Activated CD4-positive, alpha-beta memory T cell treated with anti-CD3 and anti-CD28 coated beads for 36 hours (primary cell): ENCODE measurements at regions of chr7 and their contacts with region 1.

Region 1: DNA sequence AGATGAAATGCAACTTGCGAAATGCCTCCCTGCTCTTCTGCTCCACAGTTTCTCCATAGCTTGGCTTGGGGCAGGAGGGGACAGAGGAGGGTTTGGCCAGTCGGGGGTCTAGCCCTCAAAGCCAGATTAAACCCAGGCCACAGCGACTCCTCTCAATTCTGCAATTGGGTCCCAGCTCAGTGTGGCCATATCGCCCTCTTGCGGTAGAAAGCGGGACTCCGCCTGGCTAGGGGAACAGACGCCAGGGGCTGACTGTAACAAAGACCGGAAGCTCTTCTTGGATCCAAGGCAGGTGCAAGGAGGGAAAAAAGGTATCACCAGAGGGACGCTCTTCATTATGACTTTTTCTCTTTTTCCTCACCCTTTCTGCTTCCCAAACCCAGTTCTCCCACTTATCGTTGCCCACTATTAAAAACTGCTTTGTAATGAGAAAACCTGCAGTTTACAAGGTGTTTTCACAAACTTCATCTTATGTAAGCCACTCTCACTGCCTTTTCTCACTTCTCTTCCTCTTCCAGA is 36.6 kb upstream of the TNPO3 start:
- DNase-seq: peak; percentile 93
- H3K4me3 Mint-ChIP-seq: no peak overlapping the region
- H3K27ac Mint-ChIP-seq: peak overlapping the region; percentile 52
- H3K4me1 Mint-ChIP-seq: peaks cover 15% of the 10 kb centered on the region
- H3K27me3 Mint-ChIP-seq: peaks cover 1% of the 10 kb centered on the region

Region 2: DNA sequence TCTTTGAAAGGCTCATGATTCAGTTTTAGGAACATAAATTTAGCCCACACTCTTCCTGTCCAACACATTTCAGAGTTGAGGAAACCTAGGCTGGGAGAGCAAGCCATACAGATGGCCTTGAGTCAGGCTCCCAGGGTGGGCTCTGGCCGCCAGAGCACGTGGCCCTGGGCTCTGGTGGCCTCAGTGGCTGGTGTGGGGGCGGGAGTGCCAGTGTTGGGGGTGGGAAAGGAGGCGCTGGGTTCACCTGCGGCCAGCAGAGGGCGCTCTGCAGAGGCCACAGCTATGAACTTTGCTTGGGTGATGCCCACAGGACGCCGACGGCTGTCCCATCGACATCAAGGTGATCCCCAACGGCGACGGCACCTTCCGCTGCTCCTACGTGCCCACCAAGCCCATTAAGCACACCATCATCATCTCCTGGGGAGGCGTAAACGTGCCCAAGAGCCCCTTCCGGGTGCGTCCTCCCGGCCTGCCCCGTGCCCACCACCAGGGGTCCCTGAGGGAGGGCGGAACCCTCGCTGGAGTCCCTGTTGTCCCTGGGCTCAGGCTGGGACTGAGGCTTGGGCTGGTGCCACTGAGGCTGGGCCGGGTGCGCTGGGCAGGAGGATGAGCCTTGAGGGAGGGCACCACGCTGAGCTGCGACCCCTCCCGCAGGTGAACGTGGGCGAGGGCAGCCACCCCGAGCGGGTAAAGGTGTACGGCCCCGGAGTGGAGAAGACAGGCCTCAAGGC is 249.5 kb before region 1 on chr7:
- CTCF ChIA-PET with region 1: interaction called, 6 read pairs
- POLR2A ChIA-PET with region 1: no interaction called
- intact Hi-C with region 1: loop called (anchors 1 kb)
- DNase-seq: peak; percentile 75
- H3K4me3 Mint-ChIP-seq: no peak overlapping the region
- H3K27ac Mint-ChIP-seq: no peak overlapping the region
- H3K4me1 Mint-ChIP-seq: peaks cover 5% of the 10 kb centered on the region
- H3K27me3 Mint-ChIP-seq: no peaks in the 10 kb centered on the region

Region 3: GRCh38 chr7:128904381-128905197 is 187.0 kb before region 1 on chr7:
- CTCF ChIA-PET with region 1: interaction called, 70 read pairs
- POLR2A ChIA-PET with region 1: no interaction called
- intact Hi-C with region 1: loop called (anchors 1 kb)
- DNase-seq: no peak
- H3K4me3 Mint-ChIP-seq: no peak overlapping the region
- H3K27ac Mint-ChIP-seq: no peak overlapping the region
- H3K4me1 Mint-ChIP-seq: no peaks in the 10 kb centered on the region
- H3K27me3 Mint-ChIP-seq: peaks cover 21% of the 10 kb centered on the region

Region 4: DNA sequence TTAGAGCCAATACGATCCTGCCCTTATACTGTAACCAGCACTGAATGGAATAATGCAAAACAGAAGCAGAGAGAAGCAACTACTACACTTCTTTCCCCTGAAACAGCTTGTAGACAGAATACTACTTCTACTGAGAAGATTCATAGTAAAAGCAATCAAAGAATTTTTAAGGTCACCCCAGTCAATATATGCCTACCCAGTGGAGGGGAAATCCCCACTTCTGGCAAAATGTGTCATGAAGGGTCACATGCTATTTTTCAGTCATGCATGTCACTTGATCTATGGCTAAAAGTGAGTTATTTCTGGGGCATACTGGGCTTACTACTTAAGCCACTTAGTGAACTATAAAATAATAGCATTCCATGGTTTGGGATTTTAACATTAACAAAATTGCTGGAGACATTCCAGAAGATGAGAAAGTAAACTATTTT is 128.2 kb before region 1 on chr7:
- CTCF ChIA-PET with region 1: interaction called, 8 read pairs
- POLR2A ChIA-PET with region 1: no interaction called
- intact Hi-C with region 1: loop called (anchors 1 kb)
- DNase-seq: peak; percentile 70
- H3K4me3 Mint-ChIP-seq: no peak overlapping the region
- H3K27ac Mint-ChIP-seq: peak overlapping the region; percentile 73
- H3K4me1 Mint-ChIP-seq: peaks cover 37% of the 10 kb centered on the region
- H3K27me3 Mint-ChIP-seq: no peaks in the 10 kb centered on the region

Region 5: DNA sequence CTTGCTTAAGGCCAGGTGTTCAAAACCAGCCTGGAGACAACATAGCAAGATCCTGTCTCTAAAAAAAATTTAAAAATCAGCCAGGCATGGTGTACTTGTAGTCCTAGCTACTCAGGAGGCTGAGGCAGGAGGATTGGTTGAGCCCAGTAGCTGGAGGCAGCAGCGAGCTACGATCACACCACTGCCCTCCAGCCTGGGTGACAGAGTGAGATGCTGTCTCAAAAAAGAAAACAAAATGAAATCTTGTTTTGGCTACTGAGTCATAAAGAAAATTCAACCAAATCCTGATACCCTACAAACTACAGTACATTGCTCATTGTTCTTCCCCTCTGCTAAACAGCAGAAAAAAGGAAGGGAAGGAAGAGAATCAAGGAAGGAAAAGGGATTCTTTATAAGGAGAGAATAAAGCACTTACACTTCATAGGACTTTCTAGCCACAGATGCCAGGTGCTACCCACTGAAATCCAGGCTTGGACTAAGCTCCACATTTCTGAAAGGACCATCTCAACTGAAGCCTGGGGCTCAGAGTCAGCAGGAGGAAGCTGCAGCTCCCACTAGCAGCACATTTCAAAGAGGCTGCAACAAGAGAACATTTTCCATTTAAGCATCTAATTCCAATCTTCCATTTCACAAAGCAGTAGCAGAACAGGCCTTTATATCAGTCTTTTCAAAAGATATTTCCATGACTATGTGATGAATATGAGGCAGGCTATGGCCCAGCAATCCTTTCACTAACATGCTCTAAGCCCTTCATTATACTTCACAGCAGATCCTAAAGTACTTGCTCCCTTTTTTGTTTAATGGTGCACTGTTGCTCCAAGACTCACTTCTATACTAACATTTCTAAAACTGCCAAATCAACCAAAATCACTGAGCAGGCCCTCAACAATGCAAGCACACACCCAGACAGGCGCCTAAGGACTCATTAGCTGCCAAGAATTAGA is 50.1 kb before region 1 on chr7:
- CTCF ChIA-PET with region 1: interaction called, 11 read pairs
- POLR2A ChIA-PET with region 1: no interaction called
- intact Hi-C with region 1: no loop called
- DNase-seq: peak; percentile 45
- H3K4me3 Mint-ChIP-seq: no peak overlapping the region
- H3K27ac Mint-ChIP-seq: no peak overlapping the region
- H3K4me1 Mint-ChIP-seq: peaks cover 64% of the 10 kb centered on the region
- H3K27me3 Mint-ChIP-seq: no peaks in the 10 kb centered on the region

Region 6: DNA sequence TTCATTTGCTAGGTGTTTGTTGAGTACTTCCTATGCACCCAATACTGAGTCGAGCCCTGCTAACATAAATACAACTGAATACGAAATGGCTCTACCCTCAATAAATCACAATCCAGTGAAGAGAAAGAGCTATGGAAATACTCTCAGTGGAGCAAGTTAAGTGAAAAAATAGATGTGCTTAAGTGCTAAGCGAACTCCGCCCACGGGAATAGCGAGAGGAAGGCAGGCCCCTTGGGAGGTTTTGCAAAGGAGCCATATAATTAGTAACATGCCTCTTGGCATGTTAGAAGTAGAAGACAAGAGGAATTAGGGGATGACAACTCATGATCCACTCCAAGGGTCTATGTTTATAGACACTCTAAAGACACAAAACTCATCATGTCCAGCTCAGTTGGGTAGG is 10.2 kb after region 1 on chr7:
- CTCF ChIA-PET with region 1: interaction called, 19 read pairs
- POLR2A ChIA-PET with region 1: no interaction called
- intact Hi-C with region 1: no loop called
- DNase-seq: no peak
- H3K4me3 Mint-ChIP-seq: no peak overlapping the region
- H3K27ac Mint-ChIP-seq: no peak overlapping the region
- H3K4me1 Mint-ChIP-seq: no peaks in the 10 kb centered on the region
- H3K27me3 Mint-ChIP-seq: no peaks in the 10 kb centered on the region

Region 7: DNA sequence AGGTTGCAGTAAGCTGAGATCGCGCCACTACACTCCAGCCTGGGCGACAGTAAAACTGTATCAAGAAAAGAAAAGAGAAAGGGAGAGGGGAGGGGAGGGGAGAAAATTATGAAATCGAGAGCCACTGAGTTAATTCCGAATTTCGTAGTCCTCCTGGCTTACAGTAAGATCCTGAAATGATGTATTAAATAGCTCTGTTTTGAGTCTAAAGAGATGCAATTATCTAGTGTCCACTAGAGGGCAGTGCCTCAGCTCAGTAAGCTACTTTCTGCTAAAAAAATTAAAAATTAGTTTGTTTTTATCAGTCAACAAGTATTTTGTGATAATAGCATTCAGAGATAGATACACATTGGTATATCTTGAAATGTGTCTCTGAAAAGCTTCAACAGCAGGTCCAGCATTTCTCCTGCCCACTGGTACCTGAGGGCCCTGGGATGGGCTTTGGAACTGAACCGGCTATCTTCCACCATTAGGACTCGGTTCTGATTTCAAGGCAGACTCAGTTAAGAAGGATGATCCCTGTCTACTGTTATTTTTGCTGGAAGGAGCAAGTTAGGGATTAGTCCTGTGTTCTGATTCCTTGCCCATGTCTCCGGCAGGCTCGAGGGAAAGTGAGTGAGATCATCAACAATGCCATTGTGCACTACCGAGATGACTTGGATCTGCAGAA is 72.5 kb after region 1 on chr7:
- CTCF ChIA-PET with region 1: interaction called, 11 read pairs
- POLR2A ChIA-PET with region 1: no interaction called
- intact Hi-C with region 1: no loop called
- DNase-seq: no peak
- H3K4me3 Mint-ChIP-seq: no peak overlapping the region
- H3K27ac Mint-ChIP-seq: no peak overlapping the region
- H3K4me1 Mint-ChIP-seq: peaks cover 7% of the 10 kb centered on the region
- H3K27me3 Mint-ChIP-seq: peaks cover 14% of the 10 kb centered on the region